Ovary (tissue), 10 donors: ENCODE measurements at regions of chr12 and their contacts with region 1.

Region 1: DNA sequence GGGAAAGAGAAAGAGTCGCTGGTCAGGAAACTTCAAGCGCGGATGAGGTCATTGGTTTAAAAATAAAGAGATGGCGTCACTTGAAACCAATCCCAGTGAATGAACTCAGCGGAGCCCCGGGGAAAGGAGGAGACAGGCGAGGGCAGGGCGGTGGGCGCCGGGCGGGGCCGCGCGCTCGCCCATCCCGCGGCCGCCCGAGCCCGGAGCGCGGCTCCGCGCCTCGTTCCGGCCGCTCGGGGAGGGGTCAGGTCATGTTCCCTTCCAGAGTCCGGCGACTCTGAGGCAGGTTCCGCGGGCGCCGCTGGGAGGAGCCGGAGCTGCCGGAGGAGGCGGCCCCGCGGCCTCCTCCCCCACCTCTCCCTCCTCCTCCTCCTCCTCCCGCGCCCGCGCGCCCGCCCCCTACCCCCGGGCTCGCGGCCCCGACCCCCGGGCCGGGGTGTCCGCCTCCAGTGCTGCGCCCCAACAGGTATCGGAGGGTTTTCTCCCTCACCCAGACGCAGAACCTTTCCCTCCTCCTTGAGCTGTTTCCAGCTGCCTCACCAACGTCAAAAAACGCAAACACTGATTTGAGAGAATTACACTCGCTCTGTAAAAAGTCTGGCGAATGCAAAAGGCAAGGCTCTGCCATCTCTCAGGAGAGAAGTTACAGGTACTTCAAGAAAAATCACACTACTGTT is at the start of gene DUSP16:
- DNase-seq: peak; percentile 91 to 93 (median 92)
- H3K4me3 ChIP-seq: peak within 1 kb of the TSS; percentile 52
- H3K27ac ChIP-seq: peak within 1 kb of the TSS; percentile 99 to 100
- H3K4me1 ChIP-seq: no peaks in the 10 kb centered on the region
- H3K27me3 ChIP-seq: no peaks in the 10 kb centered on the region
- CTCF ChIP-seq: peak in 2 of 3 donors; percentile 15 to 18
- EP300 ChIP-seq: no peak
- POLR2A ChIP-seq: peak; percentile 82
- total RNA-seq, gene DUSP16: 17.8 to 35.5 (median 27.3) TPM

Region 2: DNA sequence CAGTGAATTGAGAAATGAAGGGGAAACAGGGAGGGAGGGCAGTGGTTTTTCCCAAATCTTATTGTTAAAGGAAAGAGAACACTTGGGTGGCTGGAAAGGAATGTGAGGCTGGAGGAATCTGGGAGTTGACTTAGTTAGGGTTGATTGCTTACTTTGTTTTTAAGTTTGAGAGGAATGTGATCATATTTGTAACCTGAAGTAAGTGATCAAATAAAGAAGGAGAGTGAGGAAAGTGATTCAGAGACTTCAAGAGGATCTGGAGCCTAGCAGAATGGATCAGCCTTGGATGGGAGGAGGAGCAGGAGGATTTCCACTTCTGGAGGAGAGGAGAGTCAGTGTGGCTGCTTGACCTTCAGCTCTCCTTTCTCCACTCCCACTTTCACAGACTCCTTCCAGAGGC is 289.9 kb before region 1 on chr12:
- intact Hi-C with region 1: no loop called
- DNase-seq: no peak
- H3K4me3 ChIP-seq: no peak overlapping the region
- H3K27ac ChIP-seq: no peak overlapping the region
- H3K4me1 ChIP-seq: peaks cover 4% of the 10 kb centered on the region
- H3K27me3 ChIP-seq: no peaks in the 10 kb centered on the region
- CTCF ChIP-seq: no peak
- EP300 ChIP-seq: no peak
- POLR2A ChIP-seq: no peak

Region 3: GRCh38 chr12:12376646-12377448 is 185.9 kb before region 1 on chr12:
- intact Hi-C with region 1: loop called (anchors 5 to 10 kb)
- DNase-seq: peak in 1 of 5 donors; percentile 39
- H3K4me3 ChIP-seq: no peak overlapping the region
- H3K27ac ChIP-seq: no peak overlapping the region
- H3K4me1 ChIP-seq: peaks cover 6% of the 10 kb centered on the region
- H3K27me3 ChIP-seq: no peaks in the 10 kb centered on the region
- CTCF ChIP-seq: peak; percentile 72 to 87 (median 75)
- EP300 ChIP-seq: no peak
- POLR2A ChIP-seq: no peak

Region 4: GRCh38 chr12:12611512-12612306 is 49.0 kb after region 1 on chr12 and contains the start of gene CREBL2:
- intact Hi-C with region 1: loop called in 1 of 4 experiments (anchors 5 kb)
- DNase-seq: peak; percentile 95 to 98 (median 96)
- H3K4me3 ChIP-seq: peak within 1 kb of the TSS; percentile 59
- H3K27ac ChIP-seq: peak within 1 kb of the TSS; percentile 56 to 92
- H3K4me1 ChIP-seq: peaks cover 6% of the 10 kb centered on the region
- H3K27me3 ChIP-seq: no peaks in the 10 kb centered on the region
- CTCF ChIP-seq: no peak
- EP300 ChIP-seq: peak; percentile 83
- POLR2A ChIP-seq: peak; percentile 63
- total RNA-seq, gene CREBL2: 23.7 to 46.6 (median 38.2) TPM

Region 5: GRCh38 chr12:12716793-12717585 is 154.3 kb after region 1 on chr12 and contains the start of gene CDKN1B:
- intact Hi-C with region 1: loop called in 2 of 4 experiments (anchors 5 kb)
- DNase-seq: peak; percentile 92 to 95 (median 93)
- H3K4me3 ChIP-seq: peak within 1 kb of the TSS; percentile 70
- H3K27ac ChIP-seq: peak within 1 kb of the TSS; percentile 99 to 100
- H3K4me1 ChIP-seq: peaks cover 20% of the 10 kb centered on the region
- H3K27me3 ChIP-seq: no peaks in the 10 kb centered on the region
- CTCF ChIP-seq: no peak
- EP300 ChIP-seq: no peak
- POLR2A ChIP-seq: peak; percentile 57
- total RNA-seq, gene CDKN1B: 54.3 to 90.2 (median 76.8) TPM

Region 6: DNA sequence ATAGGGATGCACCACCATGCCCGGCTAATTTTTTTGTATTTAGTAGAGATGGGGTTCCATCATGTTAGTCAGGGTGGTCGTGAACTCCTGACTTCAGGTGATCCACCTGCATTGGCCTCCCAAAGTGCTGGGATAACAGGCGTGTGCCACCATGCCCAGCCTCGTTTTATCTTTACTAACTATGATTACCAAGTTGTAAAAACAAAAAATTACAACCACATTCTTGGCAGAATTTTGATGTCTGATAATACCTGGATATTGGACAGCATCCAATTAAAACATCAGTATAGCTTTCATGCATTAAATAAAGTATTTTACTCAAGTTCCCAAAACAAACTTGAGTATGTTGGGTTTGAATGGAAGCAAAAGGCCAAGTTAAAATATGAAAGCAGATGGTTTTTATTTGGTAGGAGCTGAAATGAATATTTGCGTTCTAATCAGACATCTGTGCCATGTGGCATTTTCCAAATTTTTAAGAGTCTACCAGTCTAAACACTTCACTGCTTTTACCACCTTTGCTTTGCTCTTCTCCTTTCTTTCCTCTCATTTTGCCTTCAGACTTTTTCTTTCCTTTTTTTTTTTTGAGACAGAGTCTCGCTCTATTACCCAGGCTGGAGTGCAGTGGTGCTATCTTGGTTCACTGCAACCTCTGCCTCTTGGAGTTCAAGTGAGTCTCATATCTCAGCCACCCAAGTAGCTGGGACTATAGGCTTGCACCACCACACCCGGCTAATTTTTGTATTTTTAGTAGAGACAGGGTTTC is 282.5 kb after region 1 on chr12:
- intact Hi-C with region 1: no loop called
- DNase-seq: no peak
- H3K4me3 ChIP-seq: no peak overlapping the region
- H3K27ac ChIP-seq: no peak overlapping the region
- H3K4me1 ChIP-seq: no peaks in the 10 kb centered on the region
- H3K27me3 ChIP-seq: no peaks in the 10 kb centered on the region
- CTCF ChIP-seq: no peak
- EP300 ChIP-seq: no peak
- POLR2A ChIP-seq: no peak